CD8-positive, alpha-beta memory T cell (primary cell): ENCODE measurements at regions of chr7 and their contacts with region 1.

Region 1: DNA sequence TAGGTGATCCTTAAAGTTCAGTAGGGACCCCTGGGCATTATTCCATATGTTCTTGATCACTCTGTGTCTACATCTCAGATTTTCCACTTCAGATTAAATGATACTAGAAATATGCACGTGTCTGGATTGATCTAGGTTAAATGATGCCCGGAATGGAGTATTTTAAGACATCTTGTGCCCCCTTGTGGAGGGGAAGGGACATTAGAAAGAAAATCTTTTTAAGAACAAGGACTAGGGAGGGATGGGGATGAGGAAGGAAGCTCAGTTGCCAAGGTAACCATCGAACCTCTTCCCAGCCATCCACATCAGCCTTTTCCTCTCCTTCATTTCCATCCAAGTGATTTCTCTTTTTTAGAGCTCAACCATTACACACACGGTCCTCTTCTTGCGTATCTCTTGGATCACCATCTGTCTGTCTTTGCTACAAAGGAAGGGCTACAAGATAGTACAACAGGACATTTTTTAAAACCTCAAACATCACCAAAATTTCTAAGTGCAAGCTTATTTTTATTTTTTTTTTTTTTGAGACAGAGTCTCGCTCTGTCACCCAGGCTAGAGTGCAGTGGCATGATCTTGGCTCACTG is 40.5 kb downstream of the PRSS2 start:
- DNase-seq: peak in 4 of 5 donors; percentile 34 to 81 (median 66)
- H3K4me3 ChIP-seq: no peak overlapping the region
- H3K4me3 Mint-ChIP-seq: peak overlapping the region; percentile 24 to 58 (median 45)
- H3K27ac ChIP-seq: peak overlapping the region; percentile 35
- H3K27ac Mint-ChIP-seq: peak overlapping the region; percentile 77 to 100 (median 100)
- H3K4me1 ChIP-seq: peaks cover 74% of the 10 kb centered on the region
- H3K4me1 Mint-ChIP-seq: peaks cover 60 to 78% (median 72%) of the 10 kb centered on the region in 3 donors
- H3K27me3 ChIP-seq: no peaks in the 10 kb centered on the region
- H3K27me3 Mint-ChIP-seq: peaks cover 5 to 10% of the 10 kb centered on the region in 2 donors

Region 2: DNA sequence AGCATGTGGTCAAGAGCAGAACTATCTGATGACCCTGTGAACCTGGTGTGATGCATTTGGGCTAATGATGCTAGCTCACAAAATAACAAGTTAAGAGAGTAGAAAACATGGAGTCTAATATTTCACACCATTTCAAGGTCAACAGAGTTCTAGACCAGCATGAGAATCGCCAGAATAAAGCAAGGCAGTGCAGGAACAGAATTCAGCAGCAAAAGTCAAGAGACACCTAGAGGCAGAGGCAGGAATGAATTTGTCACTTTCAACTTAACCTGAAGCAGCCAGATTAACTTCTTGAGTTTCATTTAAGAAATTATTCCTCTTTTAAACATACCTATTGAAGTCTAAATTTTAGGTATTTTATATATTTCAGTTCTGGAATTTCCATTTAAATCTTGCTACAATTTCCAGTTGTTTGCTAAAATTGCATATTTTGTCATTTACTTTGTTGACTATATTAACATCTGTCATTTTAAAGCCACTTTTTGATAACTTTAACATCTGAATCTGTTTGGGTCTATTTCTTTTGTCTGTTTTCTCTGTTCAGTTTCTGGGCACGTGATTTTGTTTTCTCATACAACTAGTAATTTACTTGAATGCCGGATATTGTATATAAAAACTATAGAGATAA is 509.2 kb before region 1 on chr7:
- CTCF ChIA-PET with region 1: interaction called, 21 read pairs
- POLR2A ChIA-PET with region 1: no interaction called
- DNase-seq: no peak
- H3K4me3 ChIP-seq: no peak overlapping the region
- H3K4me3 Mint-ChIP-seq: no peak overlapping the region
- H3K27ac ChIP-seq: no peak overlapping the region
- H3K27ac Mint-ChIP-seq: no peak overlapping the region
- H3K4me1 ChIP-seq: peaks cover 16% of the 10 kb centered on the region
- H3K4me1 Mint-ChIP-seq: peaks cover 15 to 33% (median 16%) of the 10 kb centered on the region in 3 donors
- H3K27me3 ChIP-seq: no peaks in the 10 kb centered on the region
- H3K27me3 Mint-ChIP-seq: peaks cover 13 to 22% of the 10 kb centered on the region in 2 donors

Region 3: DNA sequence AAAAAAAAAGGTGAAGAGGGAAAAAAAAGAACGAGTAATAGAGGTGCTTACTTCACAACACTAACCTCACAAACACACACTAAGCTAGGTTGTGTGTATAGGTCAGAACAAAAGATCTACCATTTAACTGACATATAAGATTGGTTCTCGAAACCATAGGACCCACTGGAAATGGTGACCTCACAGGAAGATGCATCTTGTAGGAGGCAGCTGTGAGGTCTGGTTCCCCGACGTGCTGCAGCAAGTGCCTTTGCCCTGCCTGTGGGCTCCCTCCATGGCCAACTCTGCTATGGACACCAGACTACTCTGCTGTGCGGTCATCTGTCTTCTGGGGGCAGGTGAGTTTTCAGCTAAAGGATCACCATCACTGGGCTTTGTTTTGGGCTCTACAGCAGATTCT is 195.7 kb before region 1 on chr7:
- CTCF ChIA-PET with region 1: interaction called, 3 read pairs
- POLR2A ChIA-PET with region 1: interaction called, 13 read pairs
- DNase-seq: no peak
- H3K4me3 ChIP-seq: no peak overlapping the region
- H3K4me3 Mint-ChIP-seq: peak overlapping the region; percentile 71 to 88 (median 80)
- H3K27ac ChIP-seq: no peak overlapping the region
- H3K27ac Mint-ChIP-seq: peak overlapping the region; percentile 9 to 90 (median 72)
- H3K4me1 ChIP-seq: no peaks in the 10 kb centered on the region
- H3K4me1 Mint-ChIP-seq: peaks cover 0 to 10% (median 8%) of the 10 kb centered on the region in 3 donors
- H3K27me3 ChIP-seq: no peaks in the 10 kb centered on the region
- H3K27me3 Mint-ChIP-seq: peaks cover 0 to 1% of the 10 kb centered on the region in 2 donors

Region 4: DNA sequence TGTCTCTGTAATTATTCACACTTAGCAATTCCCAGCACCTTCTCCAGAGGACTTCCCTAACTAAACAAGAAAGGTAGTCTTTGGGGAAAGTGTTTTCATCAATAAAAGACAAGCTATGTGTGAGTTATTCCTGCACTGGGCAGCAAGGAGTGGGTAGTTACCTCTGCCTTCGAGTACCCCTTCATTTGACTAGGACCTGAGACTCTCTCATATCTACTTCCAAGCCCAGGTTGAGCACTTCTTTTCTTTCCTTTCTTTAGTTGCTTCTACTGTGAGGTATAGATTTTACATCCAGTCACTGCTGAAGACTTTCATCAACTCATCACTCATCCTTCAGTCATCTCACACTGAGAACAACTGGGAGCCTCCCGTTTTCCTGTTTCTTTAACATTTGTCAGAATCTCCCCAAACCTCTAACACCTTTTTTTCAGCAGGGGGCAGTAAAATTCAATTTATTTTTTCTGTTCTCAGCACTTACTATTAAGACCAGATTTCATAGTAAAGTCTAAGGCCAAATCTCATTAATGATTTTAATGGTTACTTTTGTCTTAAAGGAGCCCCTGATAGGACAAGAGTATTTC is 142.1 kb before region 1 on chr7:
- CTCF ChIA-PET with region 1: interaction called, 12 read pairs
- POLR2A ChIA-PET with region 1: no interaction called
- DNase-seq: peak in 2 of 5 donors; percentile 20 to 29
- H3K4me3 ChIP-seq: no peak overlapping the region
- H3K4me3 Mint-ChIP-seq: no peak overlapping the region
- H3K27ac ChIP-seq: no peak overlapping the region
- H3K27ac Mint-ChIP-seq: peak overlapping the region in 3 of 8 donors; percentile 5 to 64 (median 58)
- H3K4me1 ChIP-seq: peaks cover 16% of the 10 kb centered on the region
- H3K4me1 Mint-ChIP-seq: peaks cover 22 to 26% (median 26%) of the 10 kb centered on the region in 3 donors
- H3K27me3 ChIP-seq: no peaks in the 10 kb centered on the region
- H3K27me3 Mint-ChIP-seq: no peaks in the 10 kb centered on the region

Region 5: DNA sequence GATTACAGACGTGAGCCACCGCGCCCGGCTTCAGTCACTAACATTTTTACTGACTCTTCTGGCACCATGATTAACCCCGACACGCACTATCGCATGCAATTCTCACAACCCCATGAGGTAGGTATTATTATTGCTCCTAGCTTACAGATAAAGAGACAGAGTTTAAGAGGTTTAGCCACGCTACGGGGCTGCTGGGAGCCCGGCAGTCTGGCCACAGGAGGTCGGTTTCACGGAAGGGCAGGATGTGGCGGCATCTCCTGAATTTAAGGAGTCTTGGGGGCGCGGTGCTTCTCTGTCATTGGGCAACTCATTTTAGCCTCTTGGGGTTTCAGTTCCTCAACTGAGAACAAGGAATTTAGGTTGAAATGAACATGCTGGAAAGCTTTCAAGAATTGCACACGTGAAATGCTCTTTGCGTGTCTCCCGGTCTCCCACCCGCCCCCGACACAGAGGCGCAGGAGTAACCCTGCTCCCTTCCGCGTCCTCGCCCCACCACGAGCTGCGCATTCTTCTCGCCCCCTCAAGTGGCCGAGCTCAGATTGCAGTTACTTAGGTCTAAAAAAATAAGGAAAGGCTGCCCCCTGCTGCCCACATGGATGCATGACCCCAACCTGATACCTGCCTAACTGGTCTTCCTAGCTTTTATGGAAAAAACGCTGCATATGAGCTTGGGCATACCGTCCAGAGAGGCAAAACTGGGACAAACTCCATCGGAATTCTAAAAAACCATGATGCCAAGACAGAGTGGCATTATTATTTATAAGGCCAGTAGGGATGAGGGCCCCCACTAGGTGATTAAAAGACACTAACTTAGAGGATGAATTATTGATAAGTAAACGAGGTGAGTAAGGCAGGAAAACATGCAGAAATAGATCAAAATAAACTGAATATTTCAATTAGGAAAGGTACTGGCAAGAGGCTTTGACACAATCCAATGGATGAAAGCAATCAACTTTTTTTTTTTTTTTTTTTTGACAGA is 28.0 kb before region 1 on chr7:
- CTCF ChIA-PET with region 1: interaction called, 508 read pairs
- POLR2A ChIA-PET with region 1: interaction called, 1,213 read pairs
- DNase-seq: peak; percentile 60 to 85 (median 74)
- H3K4me3 ChIP-seq: peak overlapping the region; percentile 49
- H3K4me3 Mint-ChIP-seq: peak overlapping the region; percentile 79 to 91 (median 83)
- H3K27ac ChIP-seq: no peak overlapping the region
- H3K27ac Mint-ChIP-seq: peak overlapping the region; percentile 84 to 100 (median 94)
- H3K4me1 ChIP-seq: peaks cover 9% of the 10 kb centered on the region
- H3K4me1 Mint-ChIP-seq: peaks cover 9 to 21% (median 15%) of the 10 kb centered on the region in 3 donors
- H3K27me3 ChIP-seq: no peaks in the 10 kb centered on the region
- H3K27me3 Mint-ChIP-seq: no peaks in the 10 kb centered on the region